Activated T-helper 1 cell treated with anti-CD3 and anti-CD28 coated beads, Interleukin-12 subunit alpha, Interleukin-12 subunit beta, Interleukin-2, Interleukin-4 antibody, amounts not matched to agents 30 ng/mL and 10 ng/mL and 1 ng/mL, durations not matched to agents 14 hours and 24 hours and 36 hours (primary cell): ENCODE measurements at regions of chr17 and their contacts with region 1.

Region 1: DNA sequence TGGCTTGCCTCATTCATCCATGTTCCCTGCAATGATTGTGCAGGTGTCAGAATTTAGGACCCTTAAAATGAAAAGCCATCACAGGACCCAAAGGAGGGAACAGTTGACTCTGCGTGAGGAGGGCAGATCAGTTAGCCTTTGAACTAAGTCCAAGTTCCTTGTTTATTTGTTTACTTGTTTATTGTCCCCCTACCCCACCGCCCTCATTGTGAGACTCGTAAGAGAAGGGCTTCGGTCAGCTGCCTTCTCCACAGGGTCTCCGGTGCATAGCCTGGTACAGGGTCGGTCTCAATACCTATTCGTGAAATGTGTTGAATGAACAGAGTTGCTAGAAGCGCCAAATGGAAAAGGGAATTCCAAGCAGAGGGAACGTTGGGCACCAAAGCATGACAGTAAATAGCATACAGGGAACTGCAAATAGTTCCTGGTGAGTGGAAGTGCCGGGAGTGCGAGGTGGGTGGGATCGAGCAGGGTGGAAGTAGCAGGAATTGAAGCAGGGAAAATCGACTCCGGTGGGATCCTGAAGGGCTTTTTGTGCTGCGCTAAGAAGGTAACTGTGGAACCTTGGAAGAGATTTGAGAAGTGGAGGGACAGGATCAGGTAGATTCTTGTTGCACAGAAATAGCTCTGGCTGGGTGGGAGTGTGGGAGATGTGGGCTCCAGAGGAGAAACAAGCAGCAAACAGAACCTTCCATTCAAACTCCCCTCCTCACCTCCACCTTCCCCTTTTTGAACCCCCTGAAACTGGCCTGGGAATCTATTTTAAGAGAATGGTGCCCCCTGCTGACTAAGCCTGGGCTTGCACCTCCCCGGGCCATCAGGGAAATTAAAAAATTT is 12.7 kb downstream of the SLC35B1 start:
- DNase-seq: peak; percentile 57
- H3K4me3 Mint-ChIP-seq: no peak overlapping the region
- H3K27ac Mint-ChIP-seq: peak overlapping the region; percentile 90
- H3K4me1 Mint-ChIP-seq: peaks cover 22% of the 10 kb centered on the region
- H3K27me3 Mint-ChIP-seq: no peaks in the 10 kb centered on the region

Region 2: GRCh38 chr17:49567871-49568694 is 127.0 kb before region 1 on chr17:
- intact Hi-C with region 1: loop called (anchors 1 kb)
- DNase-seq: peak; percentile 74
- H3K4me3 Mint-ChIP-seq: peak overlapping the region; percentile 55
- H3K27ac Mint-ChIP-seq: no peak overlapping the region
- H3K4me1 Mint-ChIP-seq: peaks cover 39% of the 10 kb centered on the region
- H3K27me3 Mint-ChIP-seq: peaks cover 36% of the 10 kb centered on the region

Region 3: DNA sequence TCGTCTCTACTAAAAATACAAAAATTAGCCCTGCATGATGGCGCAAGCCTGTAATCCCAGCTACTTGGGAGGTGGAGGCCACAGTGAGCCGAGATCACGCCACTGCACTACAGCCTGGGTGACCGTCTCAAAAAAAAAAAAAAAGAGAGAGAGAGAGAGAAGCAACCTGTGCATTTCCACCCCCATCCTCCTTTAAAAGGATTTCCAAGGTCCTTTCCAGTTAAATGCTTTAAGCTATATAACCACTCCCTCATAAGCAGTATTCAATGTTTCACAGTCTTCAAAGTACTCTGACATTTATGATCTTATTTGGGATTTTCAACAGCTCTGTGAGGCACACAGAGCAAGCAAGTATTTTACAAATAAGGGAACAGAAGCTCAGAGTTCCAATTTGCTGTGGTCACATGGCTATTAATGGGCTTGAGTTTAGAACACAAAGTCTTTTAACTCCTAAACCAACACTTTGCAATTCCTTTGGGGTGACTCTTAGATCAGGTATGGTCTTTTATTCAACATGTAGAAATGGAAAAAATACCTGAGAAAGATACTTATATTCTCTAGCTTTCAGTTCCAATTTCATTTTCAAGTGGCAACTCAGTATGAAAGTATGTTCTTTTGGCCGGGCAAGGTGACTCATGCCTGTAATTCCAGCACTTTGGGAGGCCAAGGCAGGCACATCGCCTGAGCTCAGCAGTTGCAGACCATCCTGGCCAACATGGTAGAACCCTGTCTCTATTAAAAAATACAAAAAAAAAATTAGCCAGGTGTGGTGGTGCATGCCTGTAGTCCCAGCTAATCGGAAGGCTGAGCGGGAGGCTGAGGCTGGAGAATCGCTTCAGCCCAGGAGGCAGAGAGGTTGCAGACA is 48.4 kb before region 1 on chr17:
- intact Hi-C with region 1: loop called (anchors 1 kb)
- DNase-seq: peak; percentile 22
- H3K4me3 Mint-ChIP-seq: peak overlapping the region; percentile 30
- H3K27ac Mint-ChIP-seq: peak overlapping the region; percentile 67
- H3K4me1 Mint-ChIP-seq: peaks cover 44% of the 10 kb centered on the region
- H3K27me3 Mint-ChIP-seq: no peaks in the 10 kb centered on the region

Region 4: GRCh38 chr17:49739641-49740271 is 44.7 kb after region 1 on chr17:
- intact Hi-C with region 1: loop called (anchors 1 kb)
- DNase-seq: peak; percentile 83
- H3K4me3 Mint-ChIP-seq: peak overlapping the region; percentile 80
- H3K27ac Mint-ChIP-seq: peak overlapping the region; percentile 99
- H3K4me1 Mint-ChIP-seq: peaks cover 72% of the 10 kb centered on the region
- H3K27me3 Mint-ChIP-seq: no peaks in the 10 kb centered on the region

Region 5: DNA sequence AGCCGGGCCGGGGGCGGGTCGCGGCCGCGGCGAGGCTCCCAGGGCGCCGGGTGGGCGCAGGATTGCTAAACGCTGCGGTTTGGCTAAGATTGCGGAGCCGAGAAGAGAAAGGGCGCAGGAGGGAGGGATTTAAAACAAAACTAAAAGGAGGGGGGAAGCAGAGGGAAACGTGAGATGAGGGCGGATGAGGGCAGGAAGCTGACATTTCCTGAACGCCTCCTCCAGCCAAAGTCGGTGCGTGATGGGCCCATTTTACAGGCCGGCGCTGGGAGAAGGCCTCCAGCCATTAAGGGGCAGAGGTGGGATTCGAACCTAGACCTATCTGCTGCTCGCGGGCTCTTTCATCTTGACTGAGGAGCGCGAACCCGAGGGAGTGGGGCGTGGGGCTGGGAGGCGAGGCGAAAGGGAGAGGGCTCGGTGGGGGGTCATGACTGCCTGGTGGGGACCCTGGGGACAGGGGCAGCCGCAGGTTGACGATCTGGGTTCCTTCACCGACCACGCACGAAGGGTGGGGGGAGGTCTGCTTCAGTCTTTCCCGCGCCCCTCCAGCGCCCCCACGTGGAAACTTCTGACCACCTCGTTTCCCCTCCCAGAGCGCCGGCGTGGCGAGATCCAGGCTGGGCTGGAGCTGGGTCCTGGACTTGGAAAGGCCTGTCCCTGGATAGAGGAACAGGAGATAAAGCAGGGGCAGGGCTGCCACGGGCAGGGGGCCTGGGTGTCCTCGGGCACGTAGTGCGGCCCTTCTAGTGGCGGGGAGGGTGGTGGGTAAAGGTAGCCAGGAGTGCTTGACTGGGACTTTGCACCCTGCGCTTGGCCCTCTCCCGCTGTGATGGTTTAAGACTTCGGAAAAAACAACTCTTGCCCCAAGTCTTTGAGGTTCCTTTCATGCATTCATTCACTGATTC is 156.6 kb after region 1 on chr17:
- intact Hi-C with region 1: loop called (anchors 5 kb)
- DNase-seq: peak; percentile 46
- H3K4me3 Mint-ChIP-seq: peak overlapping the region; percentile 79
- H3K27ac Mint-ChIP-seq: peak overlapping the region; percentile 78
- H3K4me1 Mint-ChIP-seq: peaks cover 12% of the 10 kb centered on the region
- H3K27me3 Mint-ChIP-seq: peaks cover 15% of the 10 kb centered on the region